GM12878 (cell line): ENCODE measurements at regions of chr2 and their contacts with region 1.

Region 1: GRCh38 chr2:84925724-84926376 is 20.4 kb downstream of the TMSB10 start:
- DNase-seq: peak; percentile 92
- ATAC-seq: peak; percentile 82
- H3K4me3 ChIP-seq: peak overlapping the region; percentile 71
- H3K27ac ChIP-seq: peak overlapping the region; percentile 80
- H3K4me1 ChIP-seq: peaks cover 25% of the 10 kb centered on the region
- H3K27me3 ChIP-seq: no peaks in the 10 kb centered on the region
- CTCF ChIP-seq: peak; percentile 97 to 100 (median 100); a peak in 5 of 6 replicates
- EP300 ChIP-seq: no peak
- POLR2A ChIP-seq: peak; percentile 70
- RAD21 ChIP-seq: peak; percentile 89

Region 2: GRCh38 chr2:84770280-84770679 is 155.6 kb before region 1 on chr2:
- CTCF ChIA-PET with region 1: no interaction called
- POLR2A ChIA-PET with region 1: no interaction called
- RAD21 ChIA-PET with region 1: no interaction called
- SMC1A ChIA-PET with region 1: no interaction called
- in situ Hi-C with region 1: no loop called
- intact Hi-C with region 1: no loop called
- DNase-seq: no peak
- ATAC-seq: no peak
- H3K4me3 ChIP-seq: no peak overlapping the region
- H3K27ac ChIP-seq: no peak overlapping the region
- H3K4me1 ChIP-seq: no peaks in the 10 kb centered on the region
- H3K27me3 ChIP-seq: no peaks in the 10 kb centered on the region
- CTCF ChIP-seq: no peak
- EP300 ChIP-seq: no peak
- POLR2A ChIP-seq: no peak
- RAD21 ChIP-seq: no peak

Region 3: GRCh38 chr2:84817239-84817655 is 108.6 kb before region 1 on chr2:
- CTCF ChIA-PET with region 1: interaction called, 3 read pairs
- POLR2A ChIA-PET with region 1: no interaction called
- RAD21 ChIA-PET with region 1: no interaction called
- SMC1A ChIA-PET with region 1: interaction called, 4 read pairs
- in situ Hi-C with region 1: no loop called
- intact Hi-C with region 1: loop called (anchors 5 kb)
- DNase-seq: peak; percentile 79
- ATAC-seq: peak; percentile 95
- H3K4me3 ChIP-seq: peak overlapping the region; percentile 19; the same call in 1 of the 2 replicates
- H3K27ac ChIP-seq: no peak overlapping the region
- H3K4me1 ChIP-seq: peaks cover 14% of the 10 kb centered on the region
- H3K27me3 ChIP-seq: peaks cover 3 to 5% of the 10 kb centered on the region in 2 experiments; a peak in 1 of 4 replicates
- CTCF ChIP-seq: no peak
- EP300 ChIP-seq: peak; percentile 93 to 97
- POLR2A ChIP-seq: no peak
- RAD21 ChIP-seq: no peak

Region 4: GRCh38 chr2:84870306-84870705 is 55.5 kb before region 1 on chr2:
- CTCF ChIA-PET with region 1: interaction called, 133 read pairs
- POLR2A ChIA-PET with region 1: no interaction called
- RAD21 ChIA-PET with region 1: interaction called, 40 read pairs
- SMC1A ChIA-PET with region 1: interaction called, 27 read pairs
- in situ Hi-C with region 1: no loop called
- intact Hi-C with region 1: loop called (anchors 1 kb)
- DNase-seq: no peak
- ATAC-seq: peak; percentile 79
- H3K4me3 ChIP-seq: no peak overlapping the region
- H3K27ac ChIP-seq: no peak overlapping the region
- H3K4me1 ChIP-seq: no peaks in the 10 kb centered on the region
- H3K27me3 ChIP-seq: no peaks in the 10 kb centered on the region
- CTCF ChIP-seq: peak; percentile 21 to 34 (median 32); a peak in 4 of 6 replicates
- EP300 ChIP-seq: no peak
- POLR2A ChIP-seq: no peak
- RAD21 ChIP-seq: peak; percentile 41

Region 5: GRCh38 chr2:84905181-84906107 is 20.4 kb before region 1 on chr2 and contains the start of gene TMSB10:
- CTCF ChIA-PET with region 1: interaction called, 37 read pairs
- POLR2A ChIA-PET with region 1: interaction called, 71 read pairs
- RAD21 ChIA-PET with region 1: interaction called, 67 read pairs
- SMC1A ChIA-PET with region 1: interaction called, 52 read pairs
- in situ Hi-C with region 1: no loop called
- intact Hi-C with region 1: loop called (anchors 2 kb)
- DNase-seq: no peak
- ATAC-seq: peak; percentile 81
- H3K4me3 ChIP-seq: peak within 1 kb of the TSS; percentile 99
- H3K27ac ChIP-seq: peak within 1 kb of the TSS; percentile 62
- H3K4me1 ChIP-seq: peaks cover 24% of the 10 kb centered on the region
- H3K27me3 ChIP-seq: no peaks in the 10 kb centered on the region
- CTCF ChIP-seq: peak in 2 of 3 experiments; percentile 25 to 33; a peak in 2 of 6 replicates
- EP300 ChIP-seq: no peak; a peak in 1 of 4 replicates
- POLR2A ChIP-seq: peak; percentile 99
- RAD21 ChIP-seq: no peak
- polyA plus RNA-seq, gene TMSB10: 2,817 to 3,116 TPM

Region 6: DNA sequence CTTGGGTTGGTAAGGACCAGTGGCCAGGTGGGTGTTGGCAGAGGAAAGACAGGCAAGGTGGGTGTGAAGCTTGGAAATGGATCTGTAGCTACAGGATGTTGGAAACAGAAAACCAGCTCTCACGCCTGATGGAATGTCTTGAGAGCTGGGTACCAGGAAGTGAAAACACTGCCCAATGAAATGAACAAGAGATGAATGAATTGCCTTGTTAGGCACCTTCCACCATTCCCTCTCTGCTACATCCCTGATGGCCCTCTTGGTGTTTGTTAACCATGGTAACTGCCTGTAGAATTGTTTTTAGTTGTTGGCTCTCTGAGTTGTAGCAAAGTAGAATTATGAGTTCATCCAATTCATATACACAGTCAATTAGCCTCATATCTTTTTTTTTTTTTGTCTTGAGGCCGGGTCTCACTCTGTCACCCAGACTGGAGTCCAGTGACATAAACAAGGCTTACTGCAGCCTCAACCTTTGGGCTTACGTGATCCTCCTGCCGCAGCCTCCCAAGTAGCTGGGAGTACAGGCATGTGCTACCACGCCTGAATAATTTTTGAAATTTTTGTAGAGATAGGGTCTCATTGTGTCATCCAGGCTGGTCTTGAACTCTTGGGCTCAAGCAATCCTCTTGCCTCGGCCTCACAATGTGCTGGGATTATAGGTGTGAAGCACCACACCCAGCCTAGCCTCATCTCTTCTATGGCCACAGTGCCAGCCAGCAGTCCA is 54.6 kb after region 1 on chr2:
- CTCF ChIA-PET with region 1: interaction called, 17 read pairs
- POLR2A ChIA-PET with region 1: interaction called, 3 read pairs
- RAD21 ChIA-PET with region 1: interaction called, 65 read pairs
- SMC1A ChIA-PET with region 1: interaction called, 378 read pairs
- in situ Hi-C with region 1: no loop called
- intact Hi-C with region 1: no loop called
- DNase-seq: no peak
- ATAC-seq: peak; percentile 65
- H3K4me3 ChIP-seq: no peak overlapping the region; the same call in 1 of the 2 replicates
- H3K27ac ChIP-seq: 0 out of 2 replicates have a peak overlapping the region, but pooled peaks have one; percentile 22
- H3K4me1 ChIP-seq: no peaks in the 10 kb centered on the region; the same call in 1 of the 2 replicates
- H3K27me3 ChIP-seq: no peaks in the 10 kb centered on the region
- CTCF ChIP-seq: no peak
- EP300 ChIP-seq: no peak
- POLR2A ChIP-seq: no peak
- RAD21 ChIP-seq: no peak

Region 7: DNA sequence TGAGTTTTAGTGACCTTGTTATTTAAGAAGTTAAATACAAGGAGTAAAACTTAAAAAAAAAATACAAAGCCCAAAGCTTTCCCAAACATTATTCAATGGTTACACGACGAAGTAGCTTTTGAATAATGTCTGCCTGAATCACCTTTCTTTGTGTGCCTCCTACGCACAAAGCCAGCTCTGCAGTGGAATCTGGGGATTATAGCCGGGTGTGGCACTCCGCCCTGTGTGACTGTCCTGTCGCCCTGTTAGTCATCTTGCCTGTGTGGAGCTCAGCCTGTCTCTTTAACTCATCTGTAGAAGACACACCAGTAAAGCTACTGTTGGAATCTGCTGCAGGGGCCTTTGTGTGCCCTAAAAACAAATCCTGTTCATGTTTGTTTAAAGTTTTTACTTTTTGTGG is 128.0 kb after region 1 on chr2:
- CTCF ChIA-PET with region 1: interaction called, 7 read pairs
- POLR2A ChIA-PET with region 1: no interaction called
- RAD21 ChIA-PET with region 1: interaction called, 7 read pairs
- SMC1A ChIA-PET with region 1: interaction called, 3 read pairs
- in situ Hi-C with region 1: no loop called
- intact Hi-C with region 1: loop called (anchors 5 kb)
- DNase-seq: no peak
- ATAC-seq: no peak
- H3K4me3 ChIP-seq: no peak overlapping the region
- H3K27ac ChIP-seq: no peak overlapping the region
- H3K4me1 ChIP-seq: no peaks in the 10 kb centered on the region; the same call in 1 of the 2 replicates
- H3K27me3 ChIP-seq: no peaks in the 10 kb centered on the region
- CTCF ChIP-seq: no peak
- EP300 ChIP-seq: no peak
- POLR2A ChIP-seq: no peak
- RAD21 ChIP-seq: no peak

Region 8: DNA sequence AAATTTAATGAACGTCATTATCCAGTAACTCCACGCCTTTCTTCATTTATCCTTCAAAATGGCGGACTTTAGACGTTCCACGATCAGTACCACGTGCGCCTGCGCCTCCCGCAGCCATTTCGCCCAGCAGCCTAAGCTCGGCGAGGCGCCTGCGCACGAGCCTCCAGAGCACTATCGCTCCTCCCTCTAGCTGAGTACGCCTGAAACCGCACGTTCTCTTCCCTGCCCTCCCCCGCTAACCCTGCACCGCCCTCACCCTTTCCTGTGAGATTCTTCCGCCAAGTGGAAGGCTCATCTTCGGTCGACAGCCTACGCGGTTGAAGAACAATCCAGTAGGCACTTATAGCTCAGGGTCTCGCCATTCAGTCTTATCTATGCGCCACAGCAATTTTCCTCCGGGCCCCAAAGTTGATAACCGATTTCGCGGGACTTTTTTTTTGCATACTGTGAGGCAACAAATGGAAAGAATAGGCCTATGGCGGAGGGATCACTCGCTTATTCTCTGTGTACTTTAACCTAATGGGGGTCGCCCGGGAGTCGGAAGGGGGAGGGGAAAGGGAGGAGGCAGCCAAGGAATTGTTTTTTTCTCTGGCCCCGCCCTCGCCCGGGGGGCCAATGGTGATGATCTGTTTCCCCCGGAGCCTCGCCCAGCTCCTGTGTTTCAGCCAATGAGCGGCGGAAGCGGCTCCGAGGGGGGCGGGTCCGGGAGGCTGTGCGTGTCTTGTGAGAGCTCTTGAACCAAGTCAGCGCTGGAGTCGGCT is 1515.0 kb after region 1 on chr2 and contains the start of gene KDM3A:
- CTCF ChIA-PET with region 1: no interaction called
- POLR2A ChIA-PET with region 1: no interaction called
- RAD21 ChIA-PET with region 1: no interaction called
- SMC1A ChIA-PET with region 1: no interaction called
- in situ Hi-C with region 1: loop called (anchors 25 kb)
- intact Hi-C with region 1: no loop called
- DNase-seq: peak; percentile 97
- ATAC-seq: peak; percentile 91
- H3K4me3 ChIP-seq: peak within 1 kb of the TSS; percentile 78
- H3K27ac ChIP-seq: peak within 1 kb of the TSS; percentile 100
- H3K4me1 ChIP-seq: peaks cover 11% of the 10 kb centered on the region
- H3K27me3 ChIP-seq: no peaks in the 10 kb centered on the region
- CTCF ChIP-seq: no peak
- EP300 ChIP-seq: peak in 1 of 2 experiments; percentile 17; a peak in 3 of 4 replicates
- POLR2A ChIP-seq: no peak
- RAD21 ChIP-seq: 0 out of 2 replicates have a peak, but pooled peaks have one; percentile 4
- polyA plus RNA-seq, gene KDM3A: 3.8 to 4.9 TPM